PC-3 (cell line): ENCODE measurements at regions of chr13 and their contacts with region 1.

Region 1: GRCh38 chr13:33976985-33977384 is 159.0 kb downstream of the RFC3 start:
- DNase-seq: peak; percentile 72
- ATAC-seq: peak; percentile 96
- H3K4me3 ChIP-seq: no peak overlapping the region
- H3K27ac ChIP-seq: peak overlapping the region; percentile 24; the same call in 1 of the 2 replicates
- H3K4me1 ChIP-seq: peaks cover 15% of the 10 kb centered on the region
- H3K27me3 ChIP-seq: no peaks in the 10 kb centered on the region
- CTCF ChIP-seq: no peak

Region 2: GRCh38 chr13:33799950-33800592 is 176.9 kb before region 1 on chr13:
- CTCF ChIA-PET with region 1: no interaction called
- POLR2A ChIA-PET with region 1: no interaction called
- intact Hi-C with region 1: loop called (anchors 1 kb)
- DNase-seq: peak; percentile 46
- ATAC-seq: peak; percentile 51
- H3K4me3 ChIP-seq: peak overlapping the region; percentile 29; the same call in 1 of the 2 replicates
- H3K27ac ChIP-seq: no peak overlapping the region
- H3K4me1 ChIP-seq: peaks cover 19% of the 10 kb centered on the region
- H3K27me3 ChIP-seq: no peaks in the 10 kb centered on the region
- CTCF ChIP-seq: peak; percentile 64

Region 3: DNA sequence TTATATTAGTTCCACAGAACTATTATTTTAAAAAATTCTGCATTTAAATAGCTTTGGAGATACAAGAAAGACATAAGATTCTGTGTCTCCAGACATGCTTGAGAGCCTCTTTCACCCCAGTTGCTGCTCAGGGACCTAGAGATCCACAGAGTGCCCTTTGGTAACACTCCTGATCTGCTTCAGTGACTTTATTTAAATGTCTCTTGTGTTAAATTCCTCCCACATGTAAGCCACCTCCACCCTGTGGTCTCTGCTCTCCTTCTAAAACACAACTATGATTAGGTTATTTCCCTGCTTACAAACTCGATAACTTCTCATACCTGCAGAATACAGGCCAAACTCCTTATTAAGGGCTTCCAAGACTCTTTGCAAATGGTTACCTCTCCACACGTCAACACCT is 18.0 kb before region 1 on chr13:
- CTCF ChIA-PET with region 1: no interaction called
- POLR2A ChIA-PET with region 1: no interaction called
- intact Hi-C with region 1: no loop called
- DNase-seq: no peak
- ATAC-seq: no peak
- H3K4me3 ChIP-seq: no peak overlapping the region
- H3K27ac ChIP-seq: no peak overlapping the region
- H3K4me1 ChIP-seq: no peaks in the 10 kb centered on the region
- H3K27me3 ChIP-seq: no peaks in the 10 kb centered on the region
- CTCF ChIP-seq: no peak

Region 4: GRCh38 chr13:33999811-34000605 is 23.0 kb after region 1 on chr13:
- CTCF ChIA-PET with region 1: no interaction called
- POLR2A ChIA-PET with region 1: no interaction called
- intact Hi-C with region 1: loop called (anchors 2 kb)
- DNase-seq: peak; percentile 77
- ATAC-seq: peak; percentile 76
- H3K4me3 ChIP-seq: no peak overlapping the region
- H3K27ac ChIP-seq: peak overlapping the region; percentile 72
- H3K4me1 ChIP-seq: peaks cover 46% of the 10 kb centered on the region
- H3K27me3 ChIP-seq: no peaks in the 10 kb centered on the region
- CTCF ChIP-seq: no peak